Thyroid gland (tissue), 4 donors: ENCODE measurements at regions of chr5 and their contacts with region 1.

Region 1: DNA sequence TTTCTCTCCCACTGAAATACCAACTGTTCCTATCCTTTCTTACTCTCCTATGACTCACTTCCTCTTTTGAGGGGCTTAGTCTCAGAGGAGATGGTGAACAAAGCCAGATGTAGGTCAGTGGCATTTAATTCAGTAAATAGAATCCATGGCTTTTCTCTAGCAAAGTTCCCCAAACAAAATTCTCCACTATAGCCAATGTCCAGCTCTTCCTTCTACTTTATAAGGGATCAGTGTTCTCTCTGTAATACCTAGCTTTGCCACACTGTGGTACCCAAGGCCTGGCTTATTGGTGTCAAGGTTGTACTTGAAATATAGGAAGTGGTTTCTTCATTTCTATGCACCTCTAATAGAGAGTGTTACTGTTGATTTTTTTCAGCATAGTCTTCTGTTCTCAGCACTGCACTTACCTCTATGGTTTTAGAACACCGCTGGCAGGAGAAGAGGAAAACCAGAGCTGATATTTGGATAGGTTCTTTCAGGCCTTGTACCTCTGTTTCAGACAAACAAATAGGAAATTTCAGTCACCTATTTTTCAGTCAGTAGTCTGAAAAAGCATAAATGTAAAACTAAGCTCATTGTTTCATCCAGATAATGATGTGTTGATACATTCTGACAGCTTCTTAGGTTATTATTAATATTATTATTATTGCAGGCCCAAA is 40.6 kb upstream of the ITGA2 start:
- DNase-seq: peak; percentile 57 to 69
- H3K4me3 ChIP-seq: no peak overlapping the region
- H3K27ac ChIP-seq: no peak overlapping the region
- H3K4me1 ChIP-seq: no peaks in the 10 kb centered on the region
- H3K27me3 ChIP-seq: no peaks in the 10 kb centered on the region
- CTCF ChIP-seq: peak; percentile 57 to 95 (median 79)
- POLR2A ChIP-seq: no peak

Region 2: GRCh38 chr5:53035868-53036381 is 87.4 kb after region 1 on chr5:
- intact Hi-C with region 1: no loop called
- DNase-seq: no peak
- H3K4me3 ChIP-seq: no peak overlapping the region
- H3K27ac ChIP-seq: no peak overlapping the region
- H3K4me1 ChIP-seq: peaks cover 15 to 23% of the 10 kb centered on the region in 2 donors
- H3K27me3 ChIP-seq: no peaks in the 10 kb centered on the region
- CTCF ChIP-seq: peak in 2 of 6 experiments; percentile 7 to 41
- POLR2A ChIP-seq: no peak

Region 3: DNA sequence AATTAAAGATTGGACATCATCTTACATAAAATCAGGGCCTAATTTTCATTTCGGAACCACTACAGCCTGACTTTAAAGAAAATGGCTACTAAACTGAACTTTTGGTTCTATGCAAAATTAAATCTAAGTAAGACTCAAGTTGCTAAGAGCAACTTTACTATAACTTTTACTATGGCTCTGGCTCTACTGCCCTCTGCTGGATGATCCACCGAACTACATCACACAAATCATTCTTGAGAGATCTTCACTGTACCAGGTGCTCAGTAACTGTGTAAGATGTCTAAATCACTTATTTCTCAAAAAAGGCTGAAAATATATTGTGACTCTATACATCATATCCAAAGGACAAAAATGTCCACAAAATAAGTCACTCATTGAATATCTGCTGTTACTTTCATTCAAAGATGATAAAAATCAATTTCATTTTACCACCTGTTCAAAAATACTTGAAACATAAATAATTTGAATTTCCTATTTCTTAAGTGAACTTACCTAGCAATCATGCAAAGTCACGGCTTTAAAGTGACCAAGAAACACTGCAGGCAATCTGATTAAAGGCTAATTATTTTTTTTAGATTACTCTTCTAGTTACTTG is 147.5 kb after region 1 on chr5:
- intact Hi-C with region 1: loop called (anchors 5 kb)
- DNase-seq: peak; percentile 65 to 70
- H3K4me3 ChIP-seq: no peak overlapping the region
- H3K27ac ChIP-seq: no peak overlapping the region
- H3K4me1 ChIP-seq: no peaks in the 10 kb centered on the region
- H3K27me3 ChIP-seq: no peaks in the 10 kb centered on the region
- CTCF ChIP-seq: peak; percentile 51 to 97 (median 82)
- POLR2A ChIP-seq: no peak